Right ventricle myocardium inferior (tissue), 1 donor: ENCODE measurements at regions of chr5 and their contacts with region 1.

Region 1: DNA sequence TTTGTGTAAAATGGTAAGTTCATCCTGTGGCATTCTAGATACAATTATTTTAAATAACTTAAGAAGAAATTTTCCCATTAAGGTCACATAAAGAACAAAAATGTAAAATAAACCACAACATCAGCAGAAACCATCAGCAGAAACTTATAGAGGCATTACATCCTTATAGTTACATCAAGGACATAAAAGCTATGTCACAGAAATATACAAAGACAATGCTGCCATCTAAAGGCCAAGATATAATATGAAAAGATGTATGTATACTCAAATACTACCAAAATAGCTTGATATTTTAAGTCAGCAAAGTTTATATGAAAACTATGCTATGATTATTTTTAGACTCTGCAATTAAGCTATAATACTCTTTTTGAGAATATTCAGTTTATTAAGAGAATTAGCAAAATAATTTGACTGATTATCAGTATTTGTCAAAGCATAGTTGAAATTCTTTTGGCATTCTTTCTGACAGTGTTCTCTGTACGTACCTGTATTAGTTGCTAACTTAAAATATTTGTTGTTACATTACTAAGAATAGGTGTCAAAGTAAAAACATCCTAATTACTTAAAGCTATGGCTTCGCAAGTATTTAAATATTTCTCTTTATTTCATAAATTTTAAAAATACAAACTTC is 36.2 kb downstream of the FBXL17 start:
- DNase-seq: no peak
- ATAC-seq: no peak

Region 2: GRCh38 chr5:108148715-108149139 is 196.9 kb before region 1 on chr5:
- intact Hi-C with region 1: loop called (anchors 10 kb)
- DNase-seq: no peak
- ATAC-seq: peak; percentile 39

Region 3: GRCh38 chr5:108260117-108260857 is 85.4 kb before region 1 on chr5:
- intact Hi-C with region 1: loop called (anchors 2 kb)
- DNase-seq: no peak
- ATAC-seq: peak; percentile 90